Mammary epithelial cell (primary cell): ENCODE measurements at regions of chr3 and their contacts with region 1.

Region 1: DNA sequence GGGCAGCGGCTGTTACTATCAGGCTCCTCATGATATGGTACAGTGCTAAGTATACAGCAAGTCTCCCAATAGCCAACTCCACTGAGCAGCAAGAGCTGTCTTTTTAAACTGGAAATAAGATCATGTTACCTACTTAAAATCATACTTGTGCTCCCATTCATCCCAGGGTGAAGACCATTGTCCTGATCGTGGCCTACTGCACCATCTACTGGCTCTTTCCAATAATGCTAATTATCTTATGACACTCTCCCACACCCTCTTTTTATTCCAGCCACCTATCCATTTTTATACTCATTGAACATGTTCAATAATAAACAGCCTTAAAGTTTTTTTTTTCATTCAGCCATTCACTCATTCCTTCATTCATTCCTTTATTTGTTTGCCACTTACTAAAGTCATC is 117.7 kb downstream of the GBE1 start:
- DNase-seq: no peak
- H3K4me3 ChIP-seq: no peak overlapping the region
- H3K27ac ChIP-seq: no peak overlapping the region
- H3K4me1 ChIP-seq: no peaks in the 10 kb centered on the region
- H3K27me3 ChIP-seq: no peaks in the 10 kb centered on the region
- CTCF ChIP-seq: peak; percentile 25 to 39

Region 2: DNA sequence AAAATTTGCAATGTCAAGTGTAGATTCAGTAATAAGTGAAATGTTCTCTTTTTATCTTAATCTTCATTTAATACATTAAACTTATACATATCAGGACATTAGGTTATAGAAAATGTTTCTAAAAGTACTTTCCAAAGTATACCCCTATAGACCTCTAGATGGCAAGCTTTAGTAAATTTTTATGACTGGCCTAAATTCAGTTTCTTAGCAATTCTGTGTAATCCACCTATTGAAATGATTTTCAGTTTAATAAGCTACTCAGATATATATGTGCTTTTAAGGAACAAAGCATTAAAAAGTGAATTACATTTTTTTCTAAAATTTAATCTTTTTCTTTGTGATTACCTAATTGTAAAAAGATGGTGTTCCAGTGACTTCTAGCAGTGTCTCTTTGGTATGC is 224.5 kb before region 1 on chr3:
- CTCF ChIA-PET with region 1: no interaction called
- dilution Hi-C with region 1: no loop called
- in situ Hi-C with region 1: no loop called
- intact Hi-C with region 1: loop called (anchors 1 kb)
- DNase-seq: no peak
- H3K4me3 ChIP-seq: no peak overlapping the region
- H3K27ac ChIP-seq: no peak overlapping the region
- H3K4me1 ChIP-seq: no peaks in the 10 kb centered on the region
- H3K27me3 ChIP-seq: no peaks in the 10 kb centered on the region
- CTCF ChIP-seq: peak; percentile 51

Region 3: GRCh38 chr3:81490541-81491288 is 153.0 kb before region 1 on chr3:
- CTCF ChIA-PET with region 1: no interaction called
- dilution Hi-C with region 1: no loop called
- in situ Hi-C with region 1: no loop called
- intact Hi-C with region 1: loop called (anchors 1 kb)
- DNase-seq: peak; percentile 72
- H3K4me3 ChIP-seq: no peak overlapping the region
- H3K27ac ChIP-seq: no peak overlapping the region
- H3K4me1 ChIP-seq: no peaks in the 10 kb centered on the region
- H3K27me3 ChIP-seq: no peaks in the 10 kb centered on the region
- CTCF ChIP-seq: peak; percentile 81

Region 4: GRCh38 chr3:81581966-81582599 is 61.6 kb before region 1 on chr3:
- CTCF ChIA-PET with region 1: no interaction called
- dilution Hi-C with region 1: no loop called
- in situ Hi-C with region 1: no loop called
- intact Hi-C with region 1: loop called (anchors 5 kb)
- DNase-seq: peak; percentile 19
- H3K4me3 ChIP-seq: no peak overlapping the region
- H3K27ac ChIP-seq: no peak overlapping the region
- H3K4me1 ChIP-seq: no peaks in the 10 kb centered on the region
- H3K27me3 ChIP-seq: no peaks in the 10 kb centered on the region
- CTCF ChIP-seq: peak; percentile 74